K562 (cell line): ENCODE measurements at regions of chr2 and their contacts with region 1.

Region 1: GRCh38 chr2:112254466-112255239 is at the start of gene ZC3H8:
- DNase-seq: peak; percentile 96 to 100 (median 100)
- ATAC-seq: peak; percentile 96
- H3K4me3 ChIP-seq: peak within 1 kb of the TSS; percentile 64
- H3K27ac ChIP-seq: peak within 1 kb of the TSS; percentile 87
- H3K4me1 ChIP-seq: peaks cover 24 to 38% of the 10 kb centered on the region in 2 experiments
- H3K27me3 ChIP-seq: no peaks in the 10 kb centered on the region
- CTCF ChIP-seq: peak in 2 of 3 experiments; percentile 13 to 18; a peak in 1 of 6 replicates
- EP300 ChIP-seq: no peak
- POLR2A ChIP-seq: peak; percentile 93
- RAD21 ChIP-seq: no peak
- polyA plus RNA-seq, gene ZC3H8: 26.1 to 27.5 TPM

Region 2: DNA sequence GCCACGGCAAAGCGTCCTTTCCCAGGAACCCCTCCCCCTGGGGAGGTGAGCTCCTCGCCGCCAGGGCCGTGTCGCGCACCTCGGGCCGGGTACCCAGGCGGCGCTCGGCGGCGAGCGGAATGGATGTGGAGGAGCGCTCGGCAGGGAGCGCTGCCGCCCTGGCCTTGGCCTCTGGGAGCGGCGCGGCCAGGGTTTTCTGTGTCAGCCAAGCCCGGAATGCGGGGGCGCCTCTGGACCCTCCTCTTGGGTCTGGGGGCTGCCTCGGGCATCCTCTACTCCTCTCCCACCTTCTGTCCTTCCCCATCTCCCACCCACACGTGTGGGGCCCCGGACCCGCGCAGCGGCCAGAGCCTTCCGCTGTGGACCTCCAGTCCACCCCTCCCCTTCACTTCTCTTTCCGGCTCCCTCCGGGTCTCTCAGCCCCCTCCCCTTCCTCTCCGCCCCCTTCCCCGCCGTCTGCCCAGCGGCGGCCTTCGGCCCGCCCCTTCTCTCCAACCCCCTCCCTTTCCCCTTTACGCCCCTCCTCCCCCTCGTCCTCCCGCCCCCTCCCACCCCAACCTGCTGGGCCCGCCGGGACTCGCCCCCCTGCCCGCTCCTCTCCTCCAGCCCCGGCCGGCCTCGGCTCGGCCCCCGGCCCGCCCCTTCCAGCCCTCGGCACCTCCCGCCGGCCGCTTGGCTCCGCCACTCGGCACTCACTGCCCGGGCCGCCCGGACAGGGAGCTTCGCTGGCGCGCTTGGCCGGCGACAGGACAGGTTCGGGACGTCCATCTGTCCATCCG is 356.5 kb before region 1 on chr2 and contains the start of gene MERTK:
- CTCF ChIA-PET with region 1: no interaction called
- POLR2A ChIA-PET with region 1: no interaction called
- in situ Hi-C with region 1: loop called (anchors 25 kb)
- intact Hi-C with region 1: loop called (anchors 5 kb)
- DNase-seq: peak; percentile 77 to 85 (median 84)
- ATAC-seq: peak; percentile 92
- H3K4me3 ChIP-seq: peak within 1 kb of the TSS; percentile 59
- H3K27ac ChIP-seq: 0 out of 3 replicates have a peak within 1 kb of the TSS, but pooled peaks have one; percentile 22
- H3K4me1 ChIP-seq: peaks cover 20 to 24% of the 10 kb centered on the region in 2 experiments
- H3K27me3 ChIP-seq: peaks cover 0 to 6% of the 10 kb centered on the region in 2 experiments; a peak in 2 of 5 replicates
- CTCF ChIP-seq: peak; percentile 71 to 93 (median 79)
- EP300 ChIP-seq: no peak
- POLR2A ChIP-seq: peak; percentile 65; the same call in 1 of the 2 replicates
- RAD21 ChIP-seq: peak; percentile 84 to 89
- polyA plus RNA-seq, gene MERTK: 0.23 to 0.31 TPM

Region 3: DNA sequence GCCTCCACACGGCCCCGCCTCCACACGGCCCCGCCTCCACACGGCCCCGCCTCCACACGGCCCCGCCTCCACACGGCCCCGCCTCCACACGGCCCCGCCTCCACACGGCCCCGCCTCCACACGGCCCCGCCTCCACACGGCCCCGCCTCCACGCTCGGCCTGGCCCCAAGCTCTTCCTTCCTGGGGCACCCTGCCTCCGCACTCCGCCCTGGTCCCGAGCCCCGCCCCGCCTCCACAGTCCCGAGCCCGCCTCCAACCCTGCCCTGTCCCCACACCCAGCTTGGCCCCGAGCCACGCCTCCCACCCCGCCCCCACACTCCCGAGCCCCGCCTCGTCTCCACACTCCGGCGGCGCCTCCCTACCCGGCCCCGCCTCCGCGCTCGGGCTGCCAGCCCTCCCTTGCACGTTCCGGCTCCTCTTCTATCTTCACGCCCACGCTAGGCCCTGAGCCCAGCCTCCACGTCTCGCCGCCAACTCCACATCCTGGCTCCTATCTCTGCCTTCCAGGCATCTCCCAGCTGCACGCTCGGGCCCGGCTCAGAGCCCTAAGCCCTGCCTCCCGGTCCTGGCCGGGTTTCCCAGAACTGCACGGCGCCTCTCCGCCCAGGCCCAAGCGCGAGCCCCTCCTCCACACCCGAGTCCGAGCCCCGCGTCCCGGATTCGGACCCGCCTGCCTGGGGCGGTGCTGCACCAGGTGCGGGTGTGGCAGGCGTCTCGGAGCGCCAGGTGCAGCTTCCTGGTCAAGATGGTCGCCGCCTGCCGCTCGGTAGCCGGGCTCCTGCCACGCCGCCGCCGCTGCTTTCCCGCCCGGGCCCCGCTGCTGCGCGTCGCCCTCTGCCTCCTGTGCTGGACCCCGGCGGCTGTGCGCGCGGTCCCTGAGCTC is 199.6 kb before region 1 on chr2 and contains the start of gene TMEM87B:
- CTCF ChIA-PET with region 1: no interaction called
- POLR2A ChIA-PET with region 1: no interaction called
- in situ Hi-C with region 1: no loop called
- intact Hi-C with region 1: loop called (anchors 5 kb)
- DNase-seq: peak; percentile 90 to 99 (median 92)
- ATAC-seq: peak; percentile 84
- H3K4me3 ChIP-seq: peak within 1 kb of the TSS; percentile 68
- H3K27ac ChIP-seq: peak within 1 kb of the TSS; percentile 91
- H3K4me1 ChIP-seq: peaks cover 14 to 26% of the 10 kb centered on the region in 2 experiments; a peak in 4 of 5 replicates
- H3K27me3 ChIP-seq: no peaks in the 10 kb centered on the region
- CTCF ChIP-seq: no peak
- EP300 ChIP-seq: peak; percentile 86
- POLR2A ChIP-seq: peak; percentile 79
- RAD21 ChIP-seq: peak in 1 of 2 experiments; percentile 25; a peak in 1 of 4 replicates
- polyA plus RNA-seq, gene TMEM87B: 3.7 to 5.8 TPM

Region 4: DNA sequence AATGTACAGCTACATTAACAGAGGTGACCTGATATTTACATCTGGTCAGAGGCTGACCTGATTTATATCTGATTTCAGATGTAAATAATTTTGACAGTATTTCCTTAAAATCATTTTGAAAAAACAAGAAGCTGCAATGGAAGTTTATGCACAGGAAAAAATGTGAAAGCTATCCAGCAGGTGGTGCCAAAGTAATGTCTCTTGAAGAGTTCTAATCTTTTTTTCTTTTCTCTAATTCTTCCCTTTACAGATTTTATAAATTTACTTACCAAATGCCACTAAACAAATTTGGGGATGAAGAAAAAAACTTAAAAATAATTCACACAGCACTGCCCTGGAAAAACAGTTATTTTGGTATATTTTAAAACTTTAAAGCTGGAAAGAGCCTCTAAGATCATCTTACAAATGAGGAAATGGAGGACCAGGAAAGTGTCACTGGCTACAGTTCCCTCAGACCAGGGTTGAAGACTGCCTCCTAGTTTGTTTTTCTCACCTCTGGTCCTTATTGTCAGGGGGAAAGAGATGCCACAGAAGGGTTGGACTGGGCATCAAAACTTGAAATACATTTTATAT is 132.9 kb before region 1 on chr2:
- CTCF ChIA-PET with region 1: no interaction called
- POLR2A ChIA-PET with region 1: no interaction called
- in situ Hi-C with region 1: no loop called
- intact Hi-C with region 1: loop called (anchors 5 kb)
- DNase-seq: peak in 1 of 4 experiments; percentile 55
- ATAC-seq: no peak; the same call in 2 of the 3 replicates
- H3K4me3 ChIP-seq: no peak overlapping the region
- H3K27ac ChIP-seq: no peak overlapping the region
- H3K4me1 ChIP-seq: no peaks in the 10 kb centered on the region
- H3K27me3 ChIP-seq: no peaks in the 10 kb centered on the region
- CTCF ChIP-seq: peak; percentile 43 to 78 (median 44); a peak in 4 of 6 replicates
- EP300 ChIP-seq: no peak
- POLR2A ChIP-seq: no peak
- RAD21 ChIP-seq: peak; percentile 73 to 80

Region 5: DNA sequence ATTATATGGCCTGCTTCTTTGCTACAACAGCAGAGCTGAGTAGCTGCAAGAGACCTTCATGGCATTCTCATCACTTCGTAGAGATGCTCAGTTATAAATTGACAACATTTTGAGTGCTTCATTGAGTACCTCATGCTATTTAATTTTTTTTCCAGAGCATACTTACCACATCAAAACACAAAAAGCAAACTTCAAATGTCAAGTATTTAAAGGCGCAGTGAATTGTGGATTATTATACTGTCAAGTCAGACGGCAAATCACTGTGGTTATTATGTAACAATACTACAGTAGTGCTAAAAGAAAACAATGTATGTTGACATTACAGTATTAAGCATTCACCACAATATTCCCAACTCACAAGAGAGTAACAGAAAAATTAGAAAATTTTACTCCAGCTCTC is 12.3 kb before region 1 on chr2:
- CTCF ChIA-PET with region 1: no interaction called
- POLR2A ChIA-PET with region 1: interaction called, 18 read pairs
- in situ Hi-C with region 1: no loop called
- intact Hi-C with region 1: no loop called
- DNase-seq: no peak
- ATAC-seq: no peak
- H3K4me3 ChIP-seq: no peak overlapping the region
- H3K27ac ChIP-seq: no peak overlapping the region
- H3K4me1 ChIP-seq: peaks cover 3 to 13% of the 10 kb centered on the region in 2 experiments; a peak in 3 of 5 replicates
- H3K27me3 ChIP-seq: no peaks in the 10 kb centered on the region
- CTCF ChIP-seq: no peak
- EP300 ChIP-seq: no peak
- POLR2A ChIP-seq: no peak
- RAD21 ChIP-seq: no peak

Region 6: DNA sequence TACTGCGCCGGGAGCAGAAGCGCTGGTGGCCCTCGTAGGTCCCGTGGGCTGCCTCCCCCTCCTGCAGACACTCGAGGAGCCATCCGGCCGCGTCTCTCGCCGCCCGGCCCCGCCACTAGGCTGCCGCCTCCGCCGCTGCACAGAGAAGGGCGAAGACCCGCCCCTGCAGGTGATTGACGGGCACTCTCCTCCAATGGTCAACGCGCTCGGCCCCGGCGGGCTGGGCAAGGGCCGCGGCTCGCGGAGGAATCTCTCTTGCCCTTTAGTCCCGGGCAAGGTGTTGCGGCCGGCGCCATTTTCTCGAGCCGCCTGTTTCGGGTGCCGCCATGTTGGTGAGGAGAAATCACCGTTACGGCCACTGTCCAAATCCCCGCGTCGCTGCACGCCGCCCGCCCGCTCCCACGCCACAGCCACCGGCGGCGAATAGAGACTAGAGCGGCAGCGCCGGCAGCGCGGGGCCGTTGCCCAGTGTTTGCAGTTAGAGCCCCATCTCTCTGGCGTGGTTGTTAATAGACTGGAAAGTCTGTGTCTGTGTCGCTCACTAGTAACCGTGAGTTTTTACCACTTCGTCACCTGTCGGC is 20.7 kb after region 1 on chr2 and contains the start of gene ZC3H6:
- CTCF ChIA-PET with region 1: no interaction called
- POLR2A ChIA-PET with region 1: interaction called, 16 read pairs
- in situ Hi-C with region 1: no loop called
- intact Hi-C with region 1: no loop called
- DNase-seq: peak; percentile 96 to 98 (median 97)
- ATAC-seq: peak; percentile 86
- H3K4me3 ChIP-seq: peak within 1 kb of the TSS; percentile 65
- H3K27ac ChIP-seq: peak within 1 kb of the TSS; percentile 97
- H3K4me1 ChIP-seq: peaks cover 9 to 16% of the 10 kb centered on the region in 2 experiments
- H3K27me3 ChIP-seq: no peaks in the 10 kb centered on the region
- CTCF ChIP-seq: 0 out of 6 replicates have a peak, but pooled peaks of 1 of the 3 experiments have one; percentile 15
- EP300 ChIP-seq: no peak
- POLR2A ChIP-seq: peak; percentile 91
- RAD21 ChIP-seq: peak in 1 of 2 experiments; percentile 21; a peak in 1 of 4 replicates
- polyA plus RNA-seq, gene ZC3H6: 0.45 to 0.53 TPM

Region 7: GRCh38 chr2:112481050-112481527 is 226.4 kb after region 1 on chr2:
- CTCF ChIA-PET with region 1: no interaction called
- POLR2A ChIA-PET with region 1: interaction called, 3 read pairs
- in situ Hi-C with region 1: loop called (anchors 25 kb)
- intact Hi-C with region 1: loop called (anchors 5 kb)
- DNase-seq: peak; percentile 79 to 94 (median 84)
- ATAC-seq: peak; percentile 89
- H3K4me3 ChIP-seq: peak overlapping the region; percentile 76
- H3K27ac ChIP-seq: peak overlapping the region; percentile 91
- H3K4me1 ChIP-seq: peaks cover 13 to 25% of the 10 kb centered on the region in 2 experiments; a peak in 4 of 5 replicates
- H3K27me3 ChIP-seq: no peaks in the 10 kb centered on the region; a peak in 1 of 5 replicates
- CTCF ChIP-seq: peak; percentile 87 to 96 (median 94)
- EP300 ChIP-seq: peak; percentile 36; the same call in 1 of the 2 replicates
- POLR2A ChIP-seq: peak; percentile 66
- RAD21 ChIP-seq: peak; percentile 79 to 88